Activated CD4-positive, alpha-beta memory T cell treated with anti-CD3 and anti-CD28 coated beads, Interleukin-2, amount 10 ng/mL, durations not matched to agents 7 days and 5 days (primary cell): ENCODE measurements at regions of chr11 and their contacts with region 1.

Region 1: GRCh38 chr11:130861902-130862860 is 54.1 kb downstream of the SNX19 start:
- DNase-seq: peak; percentile 89
- H3K4me3 Mint-ChIP-seq: no peak overlapping the region
- H3K27ac Mint-ChIP-seq: no peak overlapping the region
- H3K4me1 Mint-ChIP-seq: no peaks in the 10 kb centered on the region
- H3K27me3 Mint-ChIP-seq: peaks cover under 1% of the 10 kb centered on the region

Region 2: DNA sequence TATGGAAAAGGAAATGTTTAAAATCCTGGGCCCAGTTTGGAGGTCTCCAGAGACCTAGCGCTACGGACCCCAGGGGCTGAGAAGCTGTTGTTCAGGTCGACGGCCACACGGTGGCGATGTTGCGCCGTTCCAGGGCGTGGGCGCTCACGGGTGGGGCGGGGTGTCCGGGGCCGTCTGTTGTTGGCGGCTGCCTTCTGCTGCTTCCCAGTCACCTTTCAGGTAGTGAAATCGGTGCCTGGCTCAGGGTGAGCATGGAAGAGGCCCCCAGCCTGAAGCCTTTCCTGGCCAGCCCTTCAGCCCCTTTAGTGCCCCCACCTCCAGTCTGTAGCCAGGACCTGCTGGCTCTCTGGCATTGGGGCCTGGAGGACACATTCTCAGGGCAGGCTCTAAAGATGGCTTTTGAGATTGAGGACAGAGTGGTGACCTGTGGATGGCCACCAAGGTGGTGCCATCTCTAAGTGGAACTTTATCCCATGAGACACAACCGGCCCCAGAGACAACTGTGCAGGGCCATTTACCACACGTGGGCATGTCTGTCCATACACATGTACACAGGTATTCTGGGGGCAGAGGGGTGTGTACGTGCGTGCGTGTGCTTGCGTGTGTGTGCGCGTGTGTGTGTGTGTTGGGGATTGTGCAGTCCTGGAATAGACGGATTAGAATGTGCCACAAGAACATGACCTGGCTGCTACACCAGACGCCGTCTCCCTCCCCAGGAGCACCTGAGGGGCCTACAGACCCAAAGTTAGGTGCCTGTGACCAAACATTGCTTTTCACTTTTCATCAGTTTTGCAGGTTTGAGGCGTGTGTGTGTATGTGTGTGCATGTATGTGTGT is 648.8 kb before region 1 on chr11:
- CTCF ChIA-PET with region 1: interaction called, 12 read pairs
- POLR2A ChIA-PET with region 1: no interaction called
- DNase-seq: peak; percentile 71
- H3K4me3 Mint-ChIP-seq: no peak overlapping the region
- H3K27ac Mint-ChIP-seq: no peak overlapping the region
- H3K4me1 Mint-ChIP-seq: no peaks in the 10 kb centered on the region
- H3K27me3 Mint-ChIP-seq: peaks cover 4% of the 10 kb centered on the region

Region 3: DNA sequence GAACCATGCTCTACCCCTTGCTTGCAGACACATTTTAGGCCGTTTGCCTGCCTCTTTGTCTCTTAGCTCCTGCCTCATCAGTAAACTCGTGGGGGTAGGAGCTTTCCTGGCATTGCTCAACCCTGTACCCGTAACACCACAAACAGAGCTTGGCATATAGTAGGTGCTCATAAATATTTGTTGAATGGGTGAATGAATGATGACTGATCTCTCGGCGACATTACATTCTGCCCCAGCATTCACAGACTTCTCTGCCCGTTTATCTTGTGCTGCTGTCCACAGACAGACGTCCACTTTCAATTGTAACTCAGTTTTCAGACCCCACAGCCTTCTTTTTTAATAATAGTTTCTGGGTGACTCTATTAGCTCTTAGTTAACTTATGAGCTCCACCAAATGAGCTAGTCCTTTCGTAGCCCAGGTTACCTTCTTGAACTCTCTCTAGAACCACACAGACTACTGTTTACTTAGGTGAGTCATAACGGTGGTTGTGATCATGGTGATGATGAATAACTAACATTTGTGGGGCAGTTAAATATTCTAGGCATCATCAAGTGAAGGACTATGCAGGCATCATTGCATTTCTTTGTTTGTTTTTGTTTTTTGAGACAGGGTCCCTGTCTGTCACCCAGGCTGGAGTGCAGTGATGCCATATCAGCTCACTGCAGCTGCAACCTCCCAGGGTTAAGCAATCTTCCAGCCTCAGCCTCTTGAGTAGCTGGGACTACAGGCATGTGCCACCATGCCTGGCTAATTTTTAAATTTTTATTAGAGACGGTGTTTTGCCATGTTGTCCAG is 225.3 kb before region 1 on chr11:
- CTCF ChIA-PET with region 1: interaction called, 10 read pairs
- POLR2A ChIA-PET with region 1: no interaction called
- DNase-seq: no peak
- H3K4me3 Mint-ChIP-seq: peak overlapping the region; percentile 42
- H3K27ac Mint-ChIP-seq: peak overlapping the region; percentile 61
- H3K4me1 Mint-ChIP-seq: peaks cover 52% of the 10 kb centered on the region
- H3K27me3 Mint-ChIP-seq: peaks cover 3% of the 10 kb centered on the region

Region 4: DNA sequence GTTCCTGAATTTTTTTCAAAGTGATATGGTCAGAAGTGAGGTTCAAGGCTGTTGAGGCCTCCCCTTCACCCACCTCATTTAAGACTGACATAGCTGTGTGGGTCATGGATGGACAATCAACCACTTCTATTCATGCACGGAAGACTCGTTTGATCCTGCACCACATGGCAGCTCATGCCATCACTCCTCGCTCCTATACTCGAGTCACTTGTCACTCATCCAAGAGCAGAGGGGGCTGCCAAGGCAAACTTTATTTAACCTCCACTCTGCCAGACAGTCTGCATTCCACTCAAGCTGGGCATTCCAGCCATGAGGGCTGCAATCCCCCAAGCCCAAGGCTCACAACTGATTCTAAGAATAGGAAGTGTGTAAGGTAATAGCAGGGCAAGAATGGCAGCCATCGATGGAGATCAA is 20.0 kb after region 1 on chr11:
- CTCF ChIA-PET with region 1: interaction called, 12 read pairs
- POLR2A ChIA-PET with region 1: interaction called, 3 read pairs
- DNase-seq: no peak
- H3K4me3 Mint-ChIP-seq: no peak overlapping the region
- H3K27ac Mint-ChIP-seq: no peak overlapping the region
- H3K4me1 Mint-ChIP-seq: peaks cover 9% of the 10 kb centered on the region
- H3K27me3 Mint-ChIP-seq: no peaks in the 10 kb centered on the region

Region 5: GRCh38 chr11:130916238-130916855 is 54.2 kb after region 1 on chr11 and contains the start of gene SNX19:
- CTCF ChIA-PET with region 1: interaction called, 15 read pairs
- POLR2A ChIA-PET with region 1: no interaction called
- DNase-seq: peak; percentile 93
- H3K4me3 Mint-ChIP-seq: peak within 1 kb of the TSS; percentile 80
- H3K27ac Mint-ChIP-seq: peak within 1 kb of the TSS; percentile 68
- H3K4me1 Mint-ChIP-seq: peaks cover 42% of the 10 kb centered on the region
- H3K27me3 Mint-ChIP-seq: peaks cover 10% of the 10 kb centered on the region
- total RNA-seq, gene SNX19: 38.0 to 41.8 TPM

Region 6: GRCh38 chr11:131186629-131187101 is 324.5 kb after region 1 on chr11:
- CTCF ChIA-PET with region 1: no interaction called
- POLR2A ChIA-PET with region 1: no interaction called
- DNase-seq: no peak
- H3K4me3 Mint-ChIP-seq: no peak overlapping the region
- H3K27ac Mint-ChIP-seq: no peak overlapping the region
- H3K4me1 Mint-ChIP-seq: no peaks in the 10 kb centered on the region
- H3K27me3 Mint-ChIP-seq: no peaks in the 10 kb centered on the region

Region 7: GRCh38 chr11:131217313-131218310 is 355.4 kb after region 1 on chr11:
- CTCF ChIA-PET with region 1: no interaction called
- POLR2A ChIA-PET with region 1: no interaction called
- DNase-seq: no peak
- H3K4me3 Mint-ChIP-seq: no peak overlapping the region
- H3K27ac Mint-ChIP-seq: no peak overlapping the region
- H3K4me1 Mint-ChIP-seq: no peaks in the 10 kb centered on the region
- H3K27me3 Mint-ChIP-seq: no peaks in the 10 kb centered on the region